Sciatic nerve (tissue), 2 donors: ENCODE measurements at regions of chr16 and their contacts with region 1.

Region 1: GRCh38 chr16:30445408-30446202 is at the start of gene SEPHS2:
- DNase-seq: peak; percentile 98
- ATAC-seq: peak; percentile 97
- total RNA-seq, gene SEPHS2: 25.2 TPM

Region 2: DNA sequence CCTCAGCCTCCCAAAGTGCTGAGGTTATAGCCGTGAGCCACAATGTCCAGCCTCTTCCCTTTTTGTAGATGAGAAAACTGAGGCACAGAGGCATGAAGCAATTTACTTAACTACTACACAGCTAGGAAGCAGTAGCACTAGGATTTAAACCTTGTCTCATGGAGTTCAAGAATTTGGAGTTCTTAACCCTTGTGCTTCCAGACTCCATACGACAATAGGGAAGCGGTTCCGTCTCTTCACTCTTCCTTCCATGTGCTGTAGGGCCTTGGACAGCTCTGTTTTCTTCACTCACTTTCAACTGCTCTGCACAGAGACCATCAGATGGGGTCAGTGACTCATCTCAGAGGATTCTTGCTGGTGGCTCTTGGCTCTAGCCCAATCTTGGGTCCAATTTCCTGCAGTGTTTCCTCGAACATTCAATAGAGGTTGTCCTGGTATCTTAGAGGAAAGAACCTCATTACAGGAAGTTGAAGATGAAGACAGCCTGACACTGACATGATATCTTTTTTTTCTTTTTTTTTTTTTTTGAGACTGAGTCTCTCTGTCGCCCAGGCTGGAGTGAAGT is 46.2 kb after region 1 on chr16:
- intact Hi-C with region 1: loop called (anchors 10 kb)
- DNase-seq: no peak
- ATAC-seq: no peak